ENCODE measurements at regions of chr4 and their contacts with region 1.

Region 1: DNA sequence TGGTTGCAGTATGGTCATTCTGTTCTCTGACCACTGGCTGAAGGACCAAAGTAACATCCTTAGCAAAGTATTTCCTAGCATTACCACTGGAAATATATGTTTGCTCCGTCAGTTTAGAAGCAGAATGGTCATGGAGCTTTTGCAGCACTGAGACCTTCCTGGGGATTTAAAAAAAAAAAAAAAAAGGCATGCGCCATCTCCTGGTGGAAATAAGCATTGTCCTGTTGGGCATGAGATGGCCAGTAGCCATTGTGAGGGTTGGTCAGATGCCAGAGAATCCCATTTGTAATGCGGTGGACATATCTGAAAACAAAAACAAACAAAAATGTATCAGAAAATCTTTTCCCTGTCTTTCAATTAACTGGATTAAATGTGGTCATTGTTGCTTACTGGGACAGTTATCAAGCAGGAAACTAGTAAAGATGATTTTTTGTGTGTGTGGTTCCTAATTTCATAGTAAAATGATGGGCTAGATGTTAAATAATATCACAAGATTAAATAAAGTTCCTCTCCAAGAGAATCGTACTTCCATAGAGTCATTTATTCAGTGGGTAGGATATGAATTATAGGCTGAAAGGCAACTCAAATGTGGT is 139.6 kb downstream of the SOWAHB start:
- DNase-seq: peak; percentile 78
- H3K4me3 ChIP-seq: no peak overlapping the region
- H3K27ac ChIP-seq: no peak overlapping the region
- H3K4me1 ChIP-seq: peaks cover 17% of the 10 kb centered on the region
- H3K27me3 ChIP-seq: no peaks in the 10 kb centered on the region
- CTCF ChIP-seq: peak; percentile 66 to 84
- POLR2A ChIP-seq: no peak

Region 2: DNA sequence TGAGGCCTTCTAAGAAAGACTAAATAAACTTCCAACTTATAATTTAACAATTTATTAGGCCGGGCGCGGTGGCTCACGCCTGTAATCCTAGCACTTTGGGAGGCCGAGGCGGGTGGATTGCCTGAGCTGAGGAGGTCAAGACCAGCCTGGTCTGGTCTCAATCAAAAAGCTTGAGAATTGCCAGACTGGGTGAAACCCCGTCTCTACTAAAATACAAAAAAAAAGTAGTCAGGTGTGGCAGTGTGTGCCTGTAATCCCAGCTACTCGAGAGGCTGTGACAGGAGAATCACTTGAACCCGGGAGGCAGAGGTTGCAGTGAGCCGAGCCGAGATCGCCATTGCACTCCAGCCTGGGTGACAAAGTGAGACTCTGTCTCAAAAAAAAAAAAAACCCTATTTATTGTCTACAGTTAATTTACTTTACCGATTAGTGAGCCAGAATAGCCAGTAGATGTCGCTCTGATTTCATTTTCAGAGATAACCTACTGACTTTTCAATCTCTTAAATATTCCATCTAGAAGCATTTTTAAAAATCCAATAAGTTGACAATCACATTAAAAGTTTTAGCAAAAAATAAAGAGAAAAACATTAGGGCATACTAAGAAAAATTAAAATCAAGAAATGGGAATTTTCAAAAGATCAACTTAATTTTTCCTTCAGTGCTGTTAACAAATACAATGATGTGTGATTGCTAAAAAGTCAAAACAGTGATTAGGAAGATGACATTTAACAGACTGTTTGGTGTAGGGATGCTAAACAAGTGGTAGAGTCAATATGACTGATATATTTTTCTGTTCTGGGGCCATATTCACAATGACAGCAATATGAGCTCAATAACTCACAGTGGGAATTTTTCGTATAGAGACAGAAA is 327.6 kb before region 1 on chr4:
- CTCF ChIA-PET with region 1: interaction called, 9 read pairs
- POLR2A ChIA-PET with region 1: no interaction called
- dilution Hi-C with region 1: no loop called
- intact Hi-C with region 1: loop called (anchors 2 kb)
- DNase-seq: peak; percentile 61
- H3K4me3 ChIP-seq: no peak overlapping the region
- H3K27ac ChIP-seq: no peak overlapping the region
- H3K4me1 ChIP-seq: no peaks in the 10 kb centered on the region
- H3K27me3 ChIP-seq: peaks cover 14 to 26% of the 10 kb centered on the region in 2 experiments
- CTCF ChIP-seq: peak; percentile 39
- POLR2A ChIP-seq: no peak

Region 3: GRCh38 chr4:76511947-76512346 is 246.4 kb before region 1 on chr4:
- CTCF ChIA-PET with region 1: interaction called, 7 read pairs
- POLR2A ChIA-PET with region 1: no interaction called
- dilution Hi-C with region 1: no loop called
- intact Hi-C with region 1: loop called (anchors 1 kb)
- DNase-seq: no peak
- H3K4me3 ChIP-seq: no peak overlapping the region
- H3K27ac ChIP-seq: no peak overlapping the region
- H3K4me1 ChIP-seq: no peaks in the 10 kb centered on the region
- H3K27me3 ChIP-seq: no peaks in the 10 kb centered on the region
- CTCF ChIP-seq: no peak
- POLR2A ChIP-seq: no peak

Region 4: DNA sequence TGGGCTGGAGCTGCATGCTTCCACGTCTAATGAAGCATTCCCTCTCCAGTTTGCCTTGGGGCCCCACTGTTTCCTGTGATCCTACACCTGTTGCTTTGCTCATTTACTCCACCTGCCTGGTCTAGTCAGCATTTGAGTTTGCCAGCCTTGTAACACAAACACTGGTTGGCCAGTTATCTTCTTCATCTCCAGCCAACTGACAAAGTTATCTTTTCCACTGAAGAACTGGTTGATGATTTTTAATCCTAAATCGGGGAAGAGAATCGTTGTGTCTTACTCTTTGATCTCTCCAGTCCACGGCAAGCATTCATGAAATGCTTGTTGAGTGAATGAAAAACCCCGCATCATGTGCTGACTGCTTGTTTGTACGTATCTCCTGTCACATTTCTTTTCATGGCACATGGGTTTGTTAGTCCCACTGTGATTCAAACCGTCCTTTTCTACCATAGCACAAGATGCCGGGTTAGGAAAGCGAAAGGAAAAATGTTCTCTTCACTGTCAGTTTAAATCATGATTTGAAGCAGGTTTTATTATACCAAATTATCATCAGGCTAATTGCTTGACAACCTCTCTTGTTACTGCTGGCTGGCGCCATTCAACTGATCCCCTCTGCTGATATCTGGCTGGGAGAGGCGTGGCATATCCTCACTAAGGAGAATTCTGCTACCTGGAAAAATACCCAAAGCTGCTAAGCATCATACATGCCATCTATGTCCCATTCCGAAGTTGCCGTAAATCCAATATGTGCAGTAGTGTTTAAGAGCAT is 178.6 kb before region 1 on chr4:
- CTCF ChIA-PET with region 1: no interaction called
- POLR2A ChIA-PET with region 1: no interaction called
- dilution Hi-C with region 1: no loop called
- intact Hi-C with region 1: no loop called
- DNase-seq: no peak
- H3K4me3 ChIP-seq: no peak overlapping the region
- H3K27ac ChIP-seq: no peak overlapping the region
- H3K4me1 ChIP-seq: no peaks in the 10 kb centered on the region
- H3K27me3 ChIP-seq: peaks cover 0 to 4% of the 10 kb centered on the region in 2 experiments
- CTCF ChIP-seq: no peak
- POLR2A ChIP-seq: no peak

Region 5: DNA sequence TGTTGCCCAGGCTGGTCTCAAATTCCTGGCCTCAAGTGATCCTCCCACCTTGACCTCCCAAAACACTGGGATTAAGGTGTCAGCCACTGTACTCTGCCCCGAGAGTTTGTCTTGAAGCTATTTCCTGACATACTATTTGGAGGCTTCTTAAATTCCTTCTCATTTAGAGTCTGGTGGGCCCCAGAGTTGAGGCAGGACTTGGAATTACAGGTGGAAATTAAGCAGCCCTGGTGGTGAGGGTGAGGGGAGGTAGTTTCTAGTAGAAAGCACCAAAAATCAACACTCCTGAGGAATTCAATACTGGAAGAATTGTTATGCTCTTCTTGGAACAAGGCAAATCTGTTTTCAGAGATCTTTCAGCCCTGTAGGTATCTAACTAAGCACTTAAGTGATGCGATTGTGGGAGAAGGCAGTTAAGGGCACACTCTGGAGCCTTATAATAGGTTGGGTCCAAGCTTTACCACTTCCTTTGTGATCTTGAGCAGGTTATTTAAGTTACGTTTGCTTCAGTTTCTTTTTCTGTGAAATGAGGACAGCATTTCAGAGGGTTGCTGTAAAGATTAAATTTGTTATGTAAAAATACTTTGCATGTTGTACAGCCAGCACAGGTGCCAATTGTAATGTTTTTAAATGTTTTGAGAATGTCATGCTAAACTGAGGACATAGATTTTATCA is 61.1 kb before region 1 on chr4:
- CTCF ChIA-PET with region 1: no interaction called
- POLR2A ChIA-PET with region 1: no interaction called
- dilution Hi-C with region 1: no loop called
- intact Hi-C with region 1: no loop called
- DNase-seq: no peak
- H3K4me3 ChIP-seq: no peak overlapping the region
- H3K27ac ChIP-seq: no peak overlapping the region
- H3K4me1 ChIP-seq: peaks cover under 1% of the 10 kb centered on the region
- H3K27me3 ChIP-seq: no peaks in the 10 kb centered on the region
- CTCF ChIP-seq: no peak
- POLR2A ChIP-seq: no peak

Region 6: DNA sequence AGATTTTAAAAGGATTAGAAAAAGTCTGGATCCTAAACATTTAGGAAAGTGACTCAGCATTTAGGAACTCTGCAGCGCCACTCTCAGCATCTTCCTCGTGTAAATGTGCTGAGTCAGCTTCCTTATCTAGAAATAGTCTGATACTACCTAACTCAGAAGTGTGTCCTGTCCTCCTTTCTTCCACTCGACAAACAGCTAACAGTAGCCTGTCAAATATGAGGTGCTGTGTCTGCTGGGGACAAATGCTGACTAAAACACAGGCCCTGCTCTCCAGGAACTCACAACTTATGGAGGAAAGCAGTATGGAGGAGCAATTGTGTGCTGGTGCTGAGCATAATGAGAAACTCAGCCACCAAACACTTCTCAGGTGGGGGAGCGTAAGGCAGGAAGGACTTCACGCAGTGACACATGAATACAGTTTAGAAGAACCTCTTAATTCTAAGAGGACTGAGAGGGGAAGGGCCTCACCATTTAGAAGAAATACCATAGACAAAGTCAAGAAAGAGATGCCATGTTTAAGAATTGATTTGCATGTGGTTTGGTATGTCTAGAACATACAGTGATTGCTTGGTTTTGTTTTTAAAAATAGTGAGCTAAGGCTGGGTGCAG is 14.2 kb after region 1 on chr4:
- CTCF ChIA-PET with region 1: interaction called, 12 read pairs
- POLR2A ChIA-PET with region 1: no interaction called
- dilution Hi-C with region 1: no loop called
- intact Hi-C with region 1: no loop called
- DNase-seq: peak; percentile 41
- H3K4me3 ChIP-seq: no peak overlapping the region
- H3K27ac ChIP-seq: peak overlapping the region; percentile 57
- H3K4me1 ChIP-seq: peaks cover 10% of the 10 kb centered on the region
- H3K27me3 ChIP-seq: no peaks in the 10 kb centered on the region
- CTCF ChIP-seq: no peak
- POLR2A ChIP-seq: no peak

Region 7: GRCh38 chr4:76931087-76931486 is 172.7 kb after region 1 on chr4:
- CTCF ChIA-PET with region 1: no interaction called
- POLR2A ChIA-PET with region 1: no interaction called
- dilution Hi-C with region 1: no loop called
- intact Hi-C with region 1: no loop called
- DNase-seq: no peak
- H3K4me3 ChIP-seq: no peak overlapping the region
- H3K27ac ChIP-seq: no peak overlapping the region
- H3K4me1 ChIP-seq: no peaks in the 10 kb centered on the region
- H3K27me3 ChIP-seq: no peaks in the 10 kb centered on the region
- CTCF ChIP-seq: no peak
- POLR2A ChIP-seq: no peak

Region 8: DNA sequence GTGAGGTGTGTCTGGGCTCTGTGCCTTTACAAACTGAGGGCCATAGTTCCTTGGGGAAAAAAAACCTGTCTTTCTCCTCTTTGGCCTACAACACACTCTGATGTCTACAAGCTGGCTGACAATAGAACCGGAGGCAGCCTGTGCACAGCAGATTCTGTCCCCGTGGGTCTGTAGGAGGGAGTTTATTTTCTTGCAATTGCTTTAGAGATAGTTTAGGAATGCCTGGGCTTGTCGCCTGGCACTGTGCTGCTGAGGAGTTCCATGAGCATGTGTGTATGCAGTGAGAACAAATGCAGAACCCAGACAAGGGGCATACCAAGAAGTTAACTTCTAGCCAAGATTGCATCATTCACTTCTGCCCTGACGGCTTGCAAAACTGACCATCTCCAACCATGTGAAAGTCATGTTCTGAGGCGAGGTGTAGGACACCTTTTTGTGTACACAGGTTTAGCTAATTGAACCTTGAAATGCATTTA is 263.3 kb after region 1 on chr4:
- CTCF ChIA-PET with region 1: no interaction called
- POLR2A ChIA-PET with region 1: no interaction called
- dilution Hi-C with region 1: no loop called
- intact Hi-C with region 1: no loop called
- DNase-seq: no peak
- H3K4me3 ChIP-seq: no peak overlapping the region
- H3K27ac ChIP-seq: no peak overlapping the region
- H3K4me1 ChIP-seq: peaks cover 10% of the 10 kb centered on the region
- H3K27me3 ChIP-seq: no peaks in the 10 kb centered on the region
- CTCF ChIP-seq: no peak
- POLR2A ChIP-seq: no peak